ENCODE measurements at regions of chrX and their contacts with region 1.

Region 1: GRCh38 chrX:128518508-128518907 is 466.3 kb upstream of the ACTRT1 start:
- DNase-seq: peak; percentile 41
- ATAC-seq: peak; percentile 64
- H3K4me3 ChIP-seq: no peak overlapping the region
- H3K27ac ChIP-seq: no peak overlapping the region
- H3K4me1 ChIP-seq: no peaks in the 10 kb centered on the region
- H3K27me3 ChIP-seq: no peaks in the 10 kb centered on the region
- CTCF ChIP-seq: peak; percentile 62; the same call in 1 of the 2 replicates

Region 2: GRCh38 chrX:128106630-128107029 is 411.9 kb before region 1 on chrX:
- CTCF ChIA-PET with region 1: no interaction called
- POLR2A ChIA-PET with region 1: no interaction called
- intact Hi-C with region 1: loop called (anchors 1 kb)
- DNase-seq: peak; percentile 42
- ATAC-seq: peak; percentile 43; the same call in 1 of the 2 replicates
- H3K4me3 ChIP-seq: no peak overlapping the region
- H3K27ac ChIP-seq: no peak overlapping the region
- H3K4me1 ChIP-seq: no peaks in the 10 kb centered on the region
- H3K27me3 ChIP-seq: no peaks in the 10 kb centered on the region
- CTCF ChIP-seq: peak; percentile 58

Region 3: GRCh38 chrX:128251565-128251964 is 266.9 kb before region 1 on chrX:
- CTCF ChIA-PET with region 1: interaction called, 3 read pairs
- POLR2A ChIA-PET with region 1: no interaction called
- intact Hi-C with region 1: loop called (anchors 1 kb)
- DNase-seq: peak; percentile 4
- ATAC-seq: 0 out of 2 replicates have a peak, but pooled peaks have one; percentile 27
- H3K4me3 ChIP-seq: no peak overlapping the region
- H3K27ac ChIP-seq: no peak overlapping the region
- H3K4me1 ChIP-seq: no peaks in the 10 kb centered on the region
- H3K27me3 ChIP-seq: no peaks in the 10 kb centered on the region
- CTCF ChIP-seq: 0 out of 2 replicates have a peak, but pooled peaks have one; percentile 25

Region 4: DNA sequence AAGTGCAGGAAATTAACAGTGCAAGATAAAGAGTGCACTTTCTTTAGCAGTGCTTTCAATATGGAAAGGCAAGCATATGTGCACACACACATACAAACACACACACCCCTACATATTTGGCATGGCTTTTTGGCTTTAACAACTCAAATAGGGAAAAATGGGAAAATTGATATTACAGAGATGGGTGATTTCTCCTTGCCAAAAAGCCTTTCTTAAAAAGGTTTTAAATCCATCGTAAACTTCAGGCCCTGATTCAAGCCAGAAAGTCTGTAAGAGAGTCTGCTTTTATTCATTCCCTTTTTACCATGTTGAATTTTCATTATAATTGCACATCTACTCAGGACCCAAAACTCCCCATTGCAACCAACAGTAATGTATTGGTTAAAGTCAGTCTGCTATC is 145.7 kb after region 1 on chrX:
- CTCF ChIA-PET with region 1: no interaction called
- POLR2A ChIA-PET with region 1: no interaction called
- intact Hi-C with region 1: no loop called
- DNase-seq: no peak
- ATAC-seq: no peak
- H3K4me3 ChIP-seq: no peak overlapping the region
- H3K27ac ChIP-seq: no peak overlapping the region
- H3K4me1 ChIP-seq: no peaks in the 10 kb centered on the region
- H3K27me3 ChIP-seq: no peaks in the 10 kb centered on the region
- CTCF ChIP-seq: no peak

Region 5: DNA sequence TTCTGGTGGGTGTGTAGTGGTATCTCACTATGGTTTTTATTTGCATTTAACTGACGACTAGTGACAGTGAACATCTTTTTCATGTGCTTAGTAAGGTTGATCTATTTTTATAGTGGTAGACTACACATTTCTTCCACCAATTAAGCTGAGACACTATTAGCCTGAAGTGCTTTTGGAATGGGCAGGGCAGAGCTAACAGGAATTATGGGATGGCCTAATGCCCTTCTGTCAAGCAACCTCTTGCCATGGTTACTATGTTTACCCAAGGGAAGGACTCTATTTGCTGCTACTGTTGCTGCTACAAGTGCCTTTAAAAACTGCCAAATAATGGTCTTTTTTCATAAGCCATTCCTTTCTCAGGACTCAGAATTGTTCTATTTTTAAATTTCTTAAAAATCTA is 210.4 kb after region 1 on chrX:
- CTCF ChIA-PET with region 1: no interaction called
- POLR2A ChIA-PET with region 1: no interaction called
- intact Hi-C with region 1: no loop called
- DNase-seq: no peak
- ATAC-seq: no peak
- H3K4me3 ChIP-seq: no peak overlapping the region
- H3K27ac ChIP-seq: no peak overlapping the region
- H3K4me1 ChIP-seq: no peaks in the 10 kb centered on the region
- H3K27me3 ChIP-seq: no peaks in the 10 kb centered on the region
- CTCF ChIP-seq: no peak

Region 6: GRCh38 chrX:128781493-128781892 is 263.0 kb after region 1 on chrX:
- CTCF ChIA-PET with region 1: no interaction called
- POLR2A ChIA-PET with region 1: no interaction called
- intact Hi-C with region 1: loop called (anchors 5 kb)
- DNase-seq: peak; percentile 46
- ATAC-seq: 0 out of 2 replicates have a peak, but pooled peaks have one; percentile 33
- H3K4me3 ChIP-seq: no peak overlapping the region
- H3K27ac ChIP-seq: no peak overlapping the region
- H3K4me1 ChIP-seq: no peaks in the 10 kb centered on the region
- H3K27me3 ChIP-seq: no peaks in the 10 kb centered on the region
- CTCF ChIP-seq: peak; percentile 43; the same call in 1 of the 2 replicates

Measured in PC-3 (cell line).